ENCODE measurements at regions of chr17 and their contacts with region 1.

Region 1: DNA sequence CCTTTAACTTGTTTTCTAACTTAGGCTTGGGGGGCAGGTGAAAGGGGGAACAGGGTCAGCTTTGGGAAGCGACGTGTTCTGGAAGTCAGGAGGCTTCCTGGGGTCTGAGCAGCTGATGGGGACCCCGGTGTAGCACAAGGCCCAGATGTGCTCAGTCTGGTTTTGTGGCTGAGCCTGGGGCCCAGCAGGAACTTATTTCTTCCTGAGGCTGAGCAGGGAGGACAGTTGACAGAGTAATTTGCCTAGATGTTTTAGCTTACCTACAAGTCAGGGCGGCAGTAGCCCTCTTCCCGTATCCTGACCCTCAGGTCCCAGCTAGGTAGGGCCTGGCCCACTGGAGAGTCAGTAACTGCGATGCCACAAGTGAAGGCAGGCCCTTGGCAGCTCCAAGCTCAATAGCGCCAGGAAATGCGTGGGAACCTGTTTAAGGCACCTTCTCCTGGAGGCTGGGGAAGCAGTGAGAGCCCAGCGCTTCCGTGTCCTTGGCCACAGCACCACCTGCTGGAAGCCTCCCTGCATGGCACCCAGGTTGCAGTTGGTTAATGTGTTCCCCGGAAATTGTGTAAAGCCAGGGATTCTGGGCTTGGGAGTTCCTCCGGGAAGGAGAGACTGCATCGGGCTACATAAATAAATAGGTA is 5.2 kb downstream of the CCR7 start:
- DNase-seq: peak; percentile 89 to 92
- ATAC-seq: peak; percentile 76 to 89 (median 83)
- H3K4me3 ChIP-seq: peak overlapping the region in 5 of 10 donors; percentile 6 to 40 (median 20)
- H3K27ac ChIP-seq: peak overlapping the region in 9 of 10 donors; percentile 61 to 94 (median 82)
- H3K4me1 ChIP-seq: peaks cover 28 to 72% (median 53%) of the 10 kb centered on the region in 9 donors
- H3K27me3 ChIP-seq: peaks cover 0 to 21% (median 0%) of the 10 kb centered on the region in 7 donors
- CTCF ChIP-seq: peak; percentile 95 to 99 (median 98)

Region 2: DNA sequence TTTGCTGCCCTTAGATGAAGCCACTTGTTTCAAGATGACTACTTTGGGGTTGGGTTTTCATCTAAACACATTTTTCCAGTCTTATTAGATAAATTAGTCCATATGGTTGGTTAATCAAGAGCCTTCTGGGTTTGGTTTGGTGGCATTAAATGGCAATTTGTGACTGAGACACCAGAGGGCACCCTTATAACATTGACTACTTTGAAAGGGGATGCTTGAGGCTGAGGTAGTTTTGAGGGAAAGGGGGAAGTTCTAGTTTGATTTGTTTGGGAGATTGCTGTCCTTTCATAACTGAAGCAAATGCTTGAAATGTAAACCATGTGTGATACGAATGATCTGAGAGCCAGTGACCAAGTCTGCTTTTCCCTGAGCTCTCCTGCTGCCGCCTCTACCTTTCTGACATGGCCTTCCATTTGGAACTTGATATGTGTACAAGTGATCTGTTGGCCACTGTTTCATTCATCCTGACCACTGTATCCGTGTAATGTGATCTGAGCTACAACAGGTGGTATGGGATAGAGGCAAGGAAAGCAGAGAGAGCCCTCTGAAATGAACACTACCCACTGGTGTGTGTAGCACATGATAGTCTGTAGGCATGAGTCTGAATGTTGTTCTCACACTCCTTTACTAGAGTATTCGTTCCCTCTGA is 256.9 kb before region 1 on chr17:
- intact Hi-C with region 1: loop called in 3 of 10 experiments (anchors 10 kb)
- DNase-seq: peak in 1 of 2 donors; percentile 71
- ATAC-seq: peak in 7 of 8 donors; percentile 51 to 72 (median 65)
- H3K4me3 ChIP-seq: no peak overlapping the region
- H3K27ac ChIP-seq: peak overlapping the region in 6 of 10 donors; percentile 14 to 76 (median 22)
- H3K4me1 ChIP-seq: peaks cover 5 to 70% (median 51%) of the 10 kb centered on the region in 9 donors
- H3K27me3 ChIP-seq: no peaks in the 10 kb centered on the region
- CTCF ChIP-seq: peak; percentile 43 to 89 (median 81)

Region 3: GRCh38 chr17:40443583-40444327 is 116.3 kb before region 1 on chr17:
- intact Hi-C with region 1: loop called in 7 of 10 experiments (anchors 1 to 5 kb)
- DNase-seq: peak; percentile 77 to 86
- ATAC-seq: peak; percentile 22 to 61 (median 42)
- H3K4me3 ChIP-seq: peak overlapping the region; percentile 66 to 89 (median 82)
- H3K27ac ChIP-seq: peak overlapping the region; percentile 89 to 99 (median 96)
- H3K4me1 ChIP-seq: peaks cover 16 to 61% (median 50%) of the 10 kb centered on the region in 9 donors
- H3K27me3 ChIP-seq: peaks cover 0 to 15% (median 0%) of the 10 kb centered on the region in 7 donors
- CTCF ChIP-seq: peak; percentile 16 to 57 (median 45)

Region 4: GRCh38 chr17:40531051-40531991 is 28.8 kb before region 1 on chr17:
- intact Hi-C with region 1: loop called in 3 of 10 experiments (anchors 2 kb)
- DNase-seq: no peak
- ATAC-seq: no peak
- H3K4me3 ChIP-seq: no peak overlapping the region
- H3K27ac ChIP-seq: peak overlapping the region in 6 of 10 donors; percentile 71 to 85 (median 74)
- H3K4me1 ChIP-seq: peaks cover 10 to 52% (median 35%) of the 10 kb centered on the region in 9 donors
- H3K27me3 ChIP-seq: peaks cover 0 to 4% (median 0%) of the 10 kb centered on the region in 7 donors
- CTCF ChIP-seq: no peak

Region 5: GRCh38 chr17:40647624-40648383 is 87.7 kb after region 1 on chr17 and contains the start of gene SMARCE1:
- intact Hi-C with region 1: no loop called
- DNase-seq: peak; percentile 70 to 74
- ATAC-seq: peak; percentile 88 to 94 (median 92)
- H3K4me3 ChIP-seq: peak within 1 kb of the TSS; percentile 76 to 96 (median 90)
- H3K27ac ChIP-seq: peak within 1 kb of the TSS; percentile 96 to 100 (median 99)
- H3K4me1 ChIP-seq: peaks cover 14 to 48% (median 33%) of the 10 kb centered on the region in 9 donors
- H3K27me3 ChIP-seq: no peaks in the 10 kb centered on the region
- CTCF ChIP-seq: no peak
- total RNA-seq, gene SMARCE1: 57.8 to 85.5 (median 68.8) TPM